ENCODE measurements at regions of chr6 and their contacts with region 1.

Region 1: DNA sequence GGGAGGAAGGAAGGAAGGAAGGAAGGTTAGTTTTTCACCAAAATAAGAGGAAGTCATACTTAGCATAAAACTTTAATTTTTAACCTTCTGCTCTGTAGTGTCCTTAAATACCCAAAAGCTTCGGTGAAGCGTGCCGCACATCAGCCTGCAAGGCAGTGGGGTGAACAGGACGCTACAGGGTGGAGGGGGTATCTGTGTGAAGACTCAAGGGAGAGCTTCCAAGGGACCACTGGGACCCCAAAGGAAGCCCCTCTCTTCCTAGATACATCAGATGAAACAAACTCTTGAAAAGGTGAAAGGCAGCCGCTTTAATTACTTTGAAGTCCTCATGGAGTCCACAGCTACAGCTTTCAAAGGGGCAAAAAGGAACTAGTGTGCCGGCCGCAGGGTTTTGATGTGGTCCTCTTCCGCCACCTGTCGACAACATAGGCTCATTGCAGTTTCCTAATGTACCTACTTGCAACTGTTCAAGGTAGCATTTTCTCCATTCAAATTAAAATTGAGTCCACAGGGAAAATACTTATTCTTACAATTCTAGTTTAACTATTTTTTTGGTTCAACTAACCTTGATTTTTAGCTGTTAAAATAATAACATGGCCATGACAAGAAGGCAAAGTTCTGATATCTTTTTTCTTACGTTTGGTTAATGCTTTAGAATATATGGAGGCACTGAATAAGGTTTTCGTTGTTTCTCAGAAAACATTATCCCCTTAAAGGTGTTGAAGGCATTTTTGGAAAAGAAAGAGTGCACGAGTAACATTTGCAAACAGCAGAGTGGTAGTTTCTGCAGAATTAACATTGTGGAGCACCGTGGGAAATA is 135.0 kb upstream of the RIPOR2 start:
- DNase-seq: peak; percentile 72
- H3K4me3 ChIP-seq: no peak overlapping the region
- H3K27ac ChIP-seq: no peak overlapping the region
- H3K27me3 ChIP-seq: no peaks in the 10 kb centered on the region
- CTCF ChIP-seq: peak; percentile 94

Region 2: GRCh38 chr6:24581084-24581669 is 489.6 kb before region 1 on chr6:
- CTCF ChIA-PET with region 1: interaction called, 21 read pairs
- POLR2A ChIA-PET with region 1: no interaction called
- DNase-seq: peak; percentile 21
- H3K4me3 ChIP-seq: no peak overlapping the region
- H3K27ac ChIP-seq: no peak overlapping the region
- H3K27me3 ChIP-seq: peaks cover 6% of the 10 kb centered on the region
- CTCF ChIP-seq: peak; percentile 94

Region 3: DNA sequence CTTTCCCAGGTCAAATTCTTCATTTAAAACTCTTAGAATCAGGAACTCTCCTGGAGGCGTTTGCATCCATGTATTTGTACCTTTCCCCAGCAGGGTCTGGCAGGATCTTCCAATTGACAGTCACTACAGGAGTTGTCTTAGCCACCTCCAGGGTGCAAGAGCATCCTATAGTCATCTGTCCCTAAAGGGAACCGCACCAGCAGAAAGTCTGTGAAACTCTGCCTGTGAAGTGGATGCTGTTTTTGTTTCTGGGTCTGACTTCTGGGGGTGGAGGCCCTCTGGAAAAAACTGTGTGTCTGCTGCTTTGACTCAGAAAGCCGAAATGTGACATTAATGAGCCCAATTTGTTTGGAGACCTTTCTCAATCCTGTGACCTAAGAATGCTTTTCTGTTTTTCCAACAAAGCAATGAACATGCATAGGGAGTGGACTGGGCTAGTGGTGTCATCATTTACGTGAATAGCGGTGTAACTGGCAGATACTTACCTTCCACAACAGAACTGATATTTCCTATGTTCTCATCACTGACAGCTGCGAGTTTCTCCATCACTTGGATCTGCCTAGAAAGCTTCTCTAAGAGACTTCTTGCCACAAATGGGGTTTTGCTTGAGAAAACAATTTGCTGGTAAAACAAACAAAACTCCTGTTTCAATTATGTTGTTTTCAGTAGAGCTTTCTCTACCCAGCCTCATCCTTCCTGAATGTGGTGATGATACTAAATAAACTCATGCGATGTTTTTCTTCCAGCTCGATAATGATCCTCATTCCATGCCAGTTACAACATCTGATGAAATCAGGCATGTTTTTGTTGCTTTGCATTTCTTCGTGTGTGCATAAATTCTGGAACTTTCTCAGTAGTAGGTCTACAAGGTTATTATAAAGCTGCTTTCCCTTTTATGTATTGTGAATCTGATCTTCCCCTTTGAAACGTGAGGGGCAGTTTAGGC is 238.7 kb before region 1 on chr6:
- CTCF ChIA-PET with region 1: interaction called, 15 read pairs
- POLR2A ChIA-PET with region 1: no interaction called
- DNase-seq: no peak
- H3K4me3 ChIP-seq: no peak overlapping the region
- H3K27ac ChIP-seq: no peak overlapping the region
- H3K27me3 ChIP-seq: no peaks in the 10 kb centered on the region
- CTCF ChIP-seq: no peak

Region 4: DNA sequence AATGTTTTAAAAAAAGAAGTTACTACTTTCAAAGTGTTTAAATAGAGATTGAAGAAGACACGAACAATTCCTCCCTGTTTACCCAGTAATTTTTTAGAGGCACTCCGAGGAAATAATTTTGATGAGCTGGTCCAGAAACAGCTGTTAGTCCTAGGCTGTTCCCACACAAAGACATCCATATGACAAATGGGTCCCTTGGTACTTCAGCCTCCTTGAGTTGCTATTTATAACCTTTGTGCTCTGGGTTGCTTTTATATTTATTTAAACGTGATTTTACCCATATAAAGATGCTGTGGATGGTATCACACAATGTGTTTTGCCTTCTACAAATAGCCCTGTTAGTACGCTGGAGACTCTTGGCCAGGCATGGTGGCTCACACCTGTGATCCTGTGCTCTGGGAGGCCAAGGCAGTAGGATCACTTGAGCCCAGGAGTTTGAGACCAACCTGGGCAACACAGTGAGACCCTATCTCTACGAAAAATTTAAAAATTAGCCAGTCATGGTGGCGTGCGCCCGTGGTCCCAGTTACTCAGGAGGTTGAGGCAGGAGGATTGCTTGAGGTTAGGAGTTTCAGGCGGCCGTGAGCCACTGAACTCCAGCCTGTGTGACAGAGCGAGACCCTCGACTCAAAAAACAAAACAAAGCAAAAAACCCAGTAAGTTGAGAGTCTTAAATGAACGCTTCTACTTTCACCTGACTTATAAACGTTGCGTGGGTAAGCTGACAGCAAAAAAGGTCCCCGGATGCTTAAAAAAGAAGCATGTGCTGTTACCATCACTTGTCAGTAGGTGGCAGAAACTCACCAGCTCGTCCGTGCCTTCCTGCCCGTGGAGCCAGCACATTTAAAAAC is 215.1 kb before region 1 on chr6:
- CTCF ChIA-PET with region 1: interaction called, 132 read pairs
- POLR2A ChIA-PET with region 1: no interaction called
- DNase-seq: peak; percentile 59
- H3K4me3 ChIP-seq: no peak overlapping the region
- H3K27ac ChIP-seq: no peak overlapping the region
- H3K27me3 ChIP-seq: no peaks in the 10 kb centered on the region
- CTCF ChIP-seq: peak; percentile 95

Region 5: GRCh38 chr6:24910961-24911712 is 159.6 kb before region 1 on chr6:
- CTCF ChIA-PET with region 1: interaction called, 10 read pairs
- POLR2A ChIA-PET with region 1: no interaction called
- DNase-seq: no peak
- H3K4me3 ChIP-seq: peak overlapping the region; percentile 72
- H3K27ac ChIP-seq: no peak overlapping the region
- H3K27me3 ChIP-seq: peaks cover 2% of the 10 kb centered on the region
- CTCF ChIP-seq: no peak

Region 6: GRCh38 chr6:25757936-25758642 is 687.3 kb after region 1 on chr6:
- CTCF ChIA-PET with region 1: no interaction called
- POLR2A ChIA-PET with region 1: no interaction called
- DNase-seq: no peak
- H3K4me3 ChIP-seq: no peak overlapping the region
- H3K27ac ChIP-seq: no peak overlapping the region
- H3K27me3 ChIP-seq: no peaks in the 10 kb centered on the region
- CTCF ChIP-seq: no peak